ENCODE measurements at regions of chr17 and their contacts with region 1.

Region 1: DNA sequence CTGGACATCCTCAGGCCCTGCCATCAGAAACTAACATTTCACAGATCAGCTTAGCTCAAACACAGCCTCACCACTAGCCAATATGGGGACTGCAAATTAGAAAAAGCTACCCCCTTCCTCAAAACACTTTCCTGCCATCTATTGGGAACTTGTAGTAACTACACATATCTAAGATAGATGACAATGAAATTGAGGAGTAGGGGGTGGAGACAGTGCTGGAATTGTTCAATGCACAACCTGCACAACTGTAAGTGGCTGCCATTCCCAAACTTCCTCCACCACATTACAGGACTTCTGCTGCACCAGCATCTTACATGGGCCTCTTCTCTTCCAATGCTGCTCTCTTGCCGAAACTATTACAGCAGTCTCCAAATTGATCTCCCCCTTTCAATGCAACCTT is 21.9 kb downstream of the AIPL1 start:
- DNase-seq: peak; percentile 61
- H3K4me3 Mint-ChIP-seq: no peak overlapping the region
- H3K27ac Mint-ChIP-seq: no peak overlapping the region
- H3K4me1 Mint-ChIP-seq: no peaks in the 10 kb centered on the region
- H3K27me3 Mint-ChIP-seq: peaks cover 42% of the 10 kb centered on the region
- CTCF ChIP-seq: peak; percentile 53

Region 2: GRCh38 chr17:6059406-6059805 is 353.7 kb before region 1 on chr17:
- CTCF ChIA-PET with region 1: no interaction called
- POLR2A ChIA-PET with region 1: no interaction called
- intact Hi-C with region 1: loop called (anchors 5 kb)
- DNase-seq: no peak
- H3K4me3 Mint-ChIP-seq: no peak overlapping the region
- H3K27ac Mint-ChIP-seq: no peak overlapping the region
- H3K4me1 Mint-ChIP-seq: peaks cover 8% of the 10 kb centered on the region
- H3K27me3 Mint-ChIP-seq: peaks cover 59% of the 10 kb centered on the region
- CTCF ChIP-seq: no peak

Region 3: GRCh38 chr17:6393351-6393952 is 19.6 kb before region 1 on chr17:
- CTCF ChIA-PET with region 1: no interaction called
- POLR2A ChIA-PET with region 1: no interaction called
- intact Hi-C with region 1: no loop called
- DNase-seq: no peak
- H3K4me3 Mint-ChIP-seq: no peak overlapping the region
- H3K27ac Mint-ChIP-seq: no peak overlapping the region
- H3K4me1 Mint-ChIP-seq: no peaks in the 10 kb centered on the region
- H3K27me3 Mint-ChIP-seq: peaks cover 41% of the 10 kb centered on the region
- CTCF ChIP-seq: no peak

Region 4: GRCh38 chr17:6443692-6444569 is 30.9 kb after region 1 on chr17 and contains the start of gene PIMREG:
- CTCF ChIA-PET with region 1: no interaction called
- POLR2A ChIA-PET with region 1: no interaction called
- intact Hi-C with region 1: no loop called
- DNase-seq: peak; percentile 95
- H3K4me3 Mint-ChIP-seq: peak within 1 kb of the TSS; percentile 78
- H3K27ac Mint-ChIP-seq: peak within 1 kb of the TSS; percentile 40
- H3K4me1 Mint-ChIP-seq: peaks cover 13% of the 10 kb centered on the region
- H3K27me3 Mint-ChIP-seq: no peaks in the 10 kb centered on the region
- CTCF ChIP-seq: no peak
- total RNA-seq, gene PIMREG: 11.0 and 21.7 TPM in 2 replicates